ENCODE measurements at regions of chr6 and their contacts with region 1.

Region 1: GRCh38 chr6:25601800-25602673 is 50.0 kb upstream of the SCGN start:
- DNase-seq: peak; percentile 35 to 62 (median 40)
- ATAC-seq: peak; percentile 63
- H3K4me3 ChIP-seq: no peak overlapping the region
- H3K27ac ChIP-seq: no peak overlapping the region
- H3K4me1 ChIP-seq: no peaks in the 10 kb centered on the region
- H3K27me3 ChIP-seq: peaks cover 9 to 10% of the 10 kb centered on the region in 2 experiments
- CTCF ChIP-seq: peak in 2 of 3 experiments; percentile 40 to 84; a peak in 4 of 6 replicates
- EP300 ChIP-seq: no peak
- POLR2A ChIP-seq: no peak
- RAD21 ChIP-seq: peak; percentile 87 to 90

Region 2: DNA sequence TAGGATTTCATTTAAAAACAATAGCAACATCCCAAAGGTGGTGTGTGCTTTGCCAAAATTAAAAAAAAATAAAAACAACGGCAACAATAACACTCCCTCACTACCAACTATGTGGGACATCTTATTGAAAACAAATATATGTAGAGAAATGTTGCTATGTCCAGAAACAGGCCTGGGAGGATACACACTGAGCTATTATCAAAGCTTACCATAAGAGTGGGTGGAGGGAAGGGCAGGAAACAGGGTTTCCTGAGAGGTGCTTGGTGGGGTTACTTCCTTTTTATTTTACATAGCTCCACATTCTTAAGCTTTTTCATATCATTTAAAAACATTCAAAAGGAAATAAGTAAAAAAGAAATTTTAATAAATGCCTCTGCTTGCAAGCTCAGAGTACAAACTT is 516.3 kb before region 1 on chr6:
- CTCF ChIA-PET with region 1: no interaction called
- POLR2A ChIA-PET with region 1: no interaction called
- in situ Hi-C with region 1: no loop called
- intact Hi-C with region 1: loop called (anchors 10 kb)
- DNase-seq: no peak
- ATAC-seq: no peak
- H3K4me3 ChIP-seq: no peak overlapping the region
- H3K27ac ChIP-seq: no peak overlapping the region
- H3K4me1 ChIP-seq: no peaks in the 10 kb centered on the region
- H3K27me3 ChIP-seq: peaks cover 7 to 19% of the 10 kb centered on the region in 2 experiments
- CTCF ChIP-seq: no peak
- EP300 ChIP-seq: no peak
- POLR2A ChIP-seq: no peak
- RAD21 ChIP-seq: no peak

Region 3: DNA sequence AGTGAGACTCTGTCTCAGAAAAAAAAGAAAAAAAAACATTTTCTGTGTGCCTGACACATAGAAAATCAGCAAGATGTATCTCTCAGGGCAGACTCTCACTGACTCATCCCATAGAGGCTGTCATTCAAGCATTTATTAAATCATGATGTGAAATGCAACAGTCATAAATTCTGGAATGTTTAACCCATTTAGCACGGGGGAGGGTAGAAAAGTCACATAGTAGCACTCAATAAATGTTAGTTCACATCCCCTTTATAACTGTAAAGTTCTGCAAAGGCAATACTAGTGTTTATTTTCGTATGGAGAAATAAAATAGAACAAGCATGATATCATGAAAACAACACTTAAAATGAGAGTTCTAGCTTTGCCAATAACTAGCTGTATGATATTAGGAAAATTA is 338.4 kb before region 1 on chr6:
- CTCF ChIA-PET with region 1: interaction called, 13 read pairs
- POLR2A ChIA-PET with region 1: no interaction called
- in situ Hi-C with region 1: no loop called
- intact Hi-C with region 1: loop called (anchors 2 kb)
- DNase-seq: no peak
- ATAC-seq: no peak
- H3K4me3 ChIP-seq: no peak overlapping the region
- H3K27ac ChIP-seq: no peak overlapping the region
- H3K4me1 ChIP-seq: no peaks in the 10 kb centered on the region
- H3K27me3 ChIP-seq: no peaks in the 10 kb centered on the region
- CTCF ChIP-seq: no peak
- EP300 ChIP-seq: no peak
- POLR2A ChIP-seq: no peak
- RAD21 ChIP-seq: no peak

Region 4: DNA sequence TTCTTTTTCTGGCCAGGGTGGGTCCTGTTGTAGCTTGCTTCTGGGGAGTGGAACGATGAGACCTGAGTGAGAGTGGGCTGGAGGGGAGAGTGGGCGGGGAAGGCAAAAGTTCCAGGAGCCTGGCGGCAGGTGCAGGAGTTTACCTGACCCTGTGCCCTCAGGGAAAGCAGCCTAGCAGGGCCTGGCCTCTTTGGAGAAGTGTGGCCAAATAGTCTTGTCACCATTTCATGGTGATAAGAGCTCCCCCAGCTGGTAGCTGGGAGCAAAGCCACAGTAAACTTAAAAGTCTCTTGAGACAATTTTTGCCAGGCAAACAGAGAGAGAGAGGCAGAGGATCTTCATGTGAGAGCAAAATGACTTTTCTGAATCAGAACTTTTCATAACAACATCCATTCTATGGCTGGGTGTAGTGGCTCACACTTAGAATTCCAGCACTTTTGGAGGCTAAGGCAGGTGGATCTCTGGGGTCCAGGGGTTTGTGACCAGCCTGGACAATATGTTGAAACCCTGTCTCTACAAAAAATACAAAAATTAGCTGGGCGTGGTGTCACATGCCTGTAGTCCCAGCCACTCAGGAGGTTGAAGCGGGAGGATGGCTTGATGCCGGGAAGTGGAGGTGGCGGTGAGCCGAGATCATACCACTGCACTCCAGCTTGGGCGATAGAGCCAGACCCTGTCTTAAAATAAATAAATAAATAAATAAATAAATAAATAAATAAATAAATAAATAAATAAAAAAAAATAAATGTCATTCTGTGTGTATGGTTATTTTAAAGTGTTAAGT is 111.8 kb before region 1 on chr6:
- CTCF ChIA-PET with region 1: no interaction called
- POLR2A ChIA-PET with region 1: no interaction called
- in situ Hi-C with region 1: no loop called
- intact Hi-C with region 1: loop called (anchors 5 kb)
- DNase-seq: peak; percentile 39 to 82 (median 55)
- ATAC-seq: peak; percentile 98
- H3K4me3 ChIP-seq: no peak overlapping the region
- H3K27ac ChIP-seq: no peak overlapping the region
- H3K4me1 ChIP-seq: no peaks in the 10 kb centered on the region
- H3K27me3 ChIP-seq: no peaks in the 10 kb centered on the region; a peak in 1 of 5 replicates
- CTCF ChIP-seq: peak; percentile 77 to 89 (median 87)
- EP300 ChIP-seq: no peak
- POLR2A ChIP-seq: no peak
- RAD21 ChIP-seq: peak; percentile 61 to 78

Region 5: GRCh38 chr6:25717866-25718740 is 116.1 kb after region 1 on chr6:
- CTCF ChIA-PET with region 1: no interaction called
- POLR2A ChIA-PET with region 1: no interaction called
- in situ Hi-C with region 1: no loop called
- intact Hi-C with region 1: no loop called
- DNase-seq: peak; percentile 35 to 54 (median 48)
- ATAC-seq: peak; percentile 59; the same call in 2 of the 3 replicates
- H3K4me3 ChIP-seq: no peak overlapping the region
- H3K27ac ChIP-seq: no peak overlapping the region
- H3K4me1 ChIP-seq: no peaks in the 10 kb centered on the region
- H3K27me3 ChIP-seq: peaks cover 2 to 7% of the 10 kb centered on the region in 2 experiments; a peak in 2 of 5 replicates
- CTCF ChIP-seq: peak; percentile 52 to 75 (median 53); a peak in 5 of 6 replicates
- EP300 ChIP-seq: no peak
- POLR2A ChIP-seq: no peak
- RAD21 ChIP-seq: peak; percentile 74 to 79

Region 6: GRCh38 chr6:25942561-25943147 is 340.6 kb after region 1 on chr6:
- CTCF ChIA-PET with region 1: no interaction called
- POLR2A ChIA-PET with region 1: no interaction called
- in situ Hi-C with region 1: no loop called
- intact Hi-C with region 1: loop called (anchors 5 kb)
- DNase-seq: peak in 2 of 4 experiments; percentile 33 to 58
- ATAC-seq: peak; percentile 95
- H3K4me3 ChIP-seq: no peak overlapping the region
- H3K27ac ChIP-seq: no peak overlapping the region
- H3K4me1 ChIP-seq: no peaks in the 10 kb centered on the region
- H3K27me3 ChIP-seq: no peaks in the 10 kb centered on the region; a peak in 1 of 5 replicates
- CTCF ChIP-seq: peak; percentile 63 to 91 (median 64); a peak in 5 of 6 replicates
- EP300 ChIP-seq: no peak
- POLR2A ChIP-seq: no peak
- RAD21 ChIP-seq: peak; percentile 97 to 99